ENCODE measurements at regions of chr5 and their contacts with region 1.

Region 1: GRCh38 chr5:172035039-172035438 is 28.6 kb upstream of the FBXW11 start:
- DNase-seq: no peak
- ATAC-seq: no peak
- H3K4me3 ChIP-seq: no peak overlapping the region
- H3K27ac ChIP-seq: no peak overlapping the region
- H3K4me1 ChIP-seq: no peaks in the 10 kb centered on the region
- H3K27me3 ChIP-seq: no peaks in the 10 kb centered on the region
- CTCF ChIP-seq: no peak
- POLR2A ChIP-seq: no peak
- RAD21 ChIP-seq: no peak

Region 2: GRCh38 chr5:171606414-171607024 is 428.5 kb before region 1 on chr5:
- CTCF ChIA-PET with region 1: no interaction called
- POLR2A ChIA-PET with region 1: no interaction called
- dilution Hi-C with region 1: no loop called
- in situ Hi-C with region 1: loop called (anchors 25 kb)
- intact Hi-C with region 1: no loop called
- DNase-seq: peak; percentile 10
- ATAC-seq: no peak
- H3K4me3 ChIP-seq: no peak overlapping the region
- H3K27ac ChIP-seq: no peak overlapping the region
- H3K4me1 ChIP-seq: no peaks in the 10 kb centered on the region
- H3K27me3 ChIP-seq: peaks cover 19% of the 10 kb centered on the region
- CTCF ChIP-seq: peak; percentile 27; the same call in 1 of the 2 replicates
- POLR2A ChIP-seq: no peak
- RAD21 ChIP-seq: peak; percentile 35

Region 3: DNA sequence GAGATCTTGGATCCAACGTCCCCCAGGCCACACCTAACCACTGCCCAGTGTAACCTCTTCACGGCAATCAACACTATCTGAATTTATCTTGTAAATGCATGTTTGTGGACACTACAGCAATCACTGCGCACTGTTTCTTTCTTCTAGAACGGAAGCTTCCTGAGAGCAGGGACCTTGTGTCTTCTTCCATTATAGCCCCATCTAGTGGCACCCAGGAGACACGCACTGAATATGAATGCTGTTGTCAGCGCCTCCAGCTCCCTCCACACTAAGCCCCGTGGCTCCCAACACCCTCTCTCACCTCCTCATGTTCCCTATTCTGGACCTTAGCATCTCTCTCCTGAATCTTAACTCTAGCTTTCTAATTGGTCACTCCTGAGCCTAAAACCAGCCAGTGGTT is 176.7 kb before region 1 on chr5:
- CTCF ChIA-PET with region 1: no interaction called
- POLR2A ChIA-PET with region 1: no interaction called
- dilution Hi-C with region 1: no loop called
- in situ Hi-C with region 1: no loop called
- intact Hi-C with region 1: no loop called
- DNase-seq: no peak
- ATAC-seq: no peak
- H3K4me3 ChIP-seq: no peak overlapping the region
- H3K27ac ChIP-seq: no peak overlapping the region
- H3K4me1 ChIP-seq: no peaks in the 10 kb centered on the region; the same call in 1 of the 2 replicates
- H3K27me3 ChIP-seq: no peaks in the 10 kb centered on the region
- CTCF ChIP-seq: peak; percentile 39
- POLR2A ChIP-seq: no peak
- RAD21 ChIP-seq: peak; percentile 35